ENCODE measurements at regions of chr5 and their contacts with region 1.

Region 1: DNA sequence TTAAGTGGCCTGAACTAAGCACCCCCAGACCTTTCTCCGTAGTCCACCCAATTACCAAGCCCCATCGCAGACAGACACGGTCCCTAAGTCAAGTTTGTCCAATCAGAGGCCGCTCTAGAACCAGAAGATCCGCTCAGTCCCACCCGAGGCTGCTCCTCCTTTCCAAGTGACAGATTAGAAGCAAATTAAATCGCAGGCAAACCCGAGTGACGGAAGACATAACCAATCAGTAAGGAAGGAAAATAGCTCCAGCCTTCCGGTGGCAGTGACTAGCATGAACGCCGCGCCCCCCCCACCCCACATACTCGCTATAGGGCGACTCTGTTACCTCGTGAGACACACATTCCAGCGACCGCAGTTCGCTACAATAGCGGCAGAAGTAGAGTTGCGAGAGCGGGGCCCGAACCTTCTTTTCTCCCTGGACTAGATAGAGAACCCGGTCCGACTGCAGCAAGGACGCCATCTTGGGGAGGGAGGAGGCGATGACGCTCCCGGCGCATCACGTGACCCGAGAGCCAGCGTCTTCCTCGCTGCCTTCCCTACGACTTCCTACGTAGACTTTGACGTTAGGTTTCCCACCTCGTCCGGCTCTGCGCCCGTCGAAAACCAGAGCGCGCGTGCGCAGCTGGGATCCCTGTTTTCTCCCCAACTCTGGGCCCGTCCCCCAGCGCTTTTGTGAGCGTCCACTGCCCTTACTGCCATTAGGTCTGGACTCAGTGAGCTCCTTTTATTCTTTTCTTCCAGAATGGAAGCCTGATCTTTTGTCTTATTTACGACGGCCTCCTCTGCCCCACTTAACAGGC is at the start of gene DCTN4:
- DNase-seq: peak; percentile 82 to 99 (median 90)
- ATAC-seq: peak; percentile 92
- H3K4me3 ChIP-seq: peak within 1 kb of the TSS; percentile 69
- H3K4me3 Mint-ChIP-seq: no peak within 1 kb of the TSS
- H3K27ac ChIP-seq: peak within 1 kb of the TSS; percentile 96
- H3K27ac Mint-ChIP-seq: no peak within 1 kb of the TSS
- H3K4me1 ChIP-seq: peaks cover 24% of the 10 kb centered on the region
- H3K4me1 Mint-ChIP-seq: peaks cover 33% of the 10 kb centered on the region
- H3K27me3 ChIP-seq: no peaks in the 10 kb centered on the region
- H3K27me3 Mint-ChIP-seq: no peaks in the 10 kb centered on the region
- CTCF ChIP-seq: no peak
- total RNA-seq, gene DCTN4: 81.2 to 84.4 TPM

Region 2: DNA sequence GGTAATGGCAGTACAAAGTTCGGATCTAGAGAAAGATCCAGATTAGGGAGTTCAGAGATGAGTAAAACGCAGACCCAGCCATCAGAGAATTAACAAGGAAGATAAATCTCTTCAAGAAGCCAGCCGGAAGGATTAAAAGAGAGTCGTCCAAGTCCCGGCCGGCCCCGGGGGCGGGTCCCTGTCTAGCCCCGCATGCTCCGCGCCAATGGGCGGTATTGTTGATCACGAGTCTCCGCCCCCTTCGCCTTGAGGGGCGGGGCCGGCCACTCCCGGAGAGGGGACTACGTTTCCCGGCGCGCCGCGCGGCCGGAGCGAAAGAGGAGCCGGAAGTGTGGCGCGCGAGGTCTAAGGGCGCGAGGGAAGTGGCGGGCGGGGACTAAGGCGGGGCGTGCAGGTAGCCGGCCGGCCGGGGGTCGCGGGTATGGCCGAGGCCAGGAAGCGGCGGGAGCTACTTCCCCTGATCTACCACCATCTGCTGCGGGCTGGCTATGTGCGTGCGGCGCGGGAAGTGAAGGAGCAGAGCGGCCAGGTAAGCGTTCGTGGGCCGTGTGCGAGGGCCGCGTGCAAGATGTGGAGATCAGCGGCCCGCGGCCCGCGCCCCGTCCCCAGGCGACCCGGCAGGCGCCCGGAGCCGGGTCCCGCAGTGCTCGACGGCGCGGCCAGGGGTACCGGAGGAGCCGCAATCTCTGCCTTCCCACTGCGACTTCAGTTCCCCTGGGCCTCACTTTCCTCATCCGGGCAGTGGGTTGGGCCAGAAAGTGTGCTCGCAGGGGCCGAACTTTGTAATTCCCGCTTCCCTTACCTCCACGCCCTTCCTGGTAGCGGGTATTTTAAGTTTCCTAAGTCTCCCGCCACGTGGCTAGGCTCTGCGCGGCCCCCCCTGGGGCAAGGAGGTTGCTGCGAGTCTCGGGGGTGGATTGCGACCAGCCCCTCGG is 401.1 kb before region 1 on chr5 and contains the start of gene TCOF1:
- CTCF ChIA-PET with region 1: no interaction called
- POLR2A ChIA-PET with region 1: no interaction called
- intact Hi-C with region 1: loop called in 1 of 2 experiments (anchors 5 kb)
- DNase-seq: peak; percentile 93 to 98 (median 97)
- ATAC-seq: peak; percentile 98
- H3K4me3 ChIP-seq: peak within 1 kb of the TSS; percentile 86
- H3K4me3 Mint-ChIP-seq: peak within 1 kb of the TSS; percentile 89
- H3K27ac ChIP-seq: peak within 1 kb of the TSS in 1 of 2 donors; percentile 46
- H3K27ac Mint-ChIP-seq: peak within 1 kb of the TSS; percentile 73
- H3K4me1 ChIP-seq: peaks cover 28% of the 10 kb centered on the region
- H3K4me1 Mint-ChIP-seq: peaks cover 47% of the 10 kb centered on the region
- H3K27me3 ChIP-seq: no peaks in the 10 kb centered on the region
- H3K27me3 Mint-ChIP-seq: no peaks in the 10 kb centered on the region
- CTCF ChIP-seq: no peak
- total RNA-seq, gene TCOF1: 40.4 to 43.2 TPM

Region 3: DNA sequence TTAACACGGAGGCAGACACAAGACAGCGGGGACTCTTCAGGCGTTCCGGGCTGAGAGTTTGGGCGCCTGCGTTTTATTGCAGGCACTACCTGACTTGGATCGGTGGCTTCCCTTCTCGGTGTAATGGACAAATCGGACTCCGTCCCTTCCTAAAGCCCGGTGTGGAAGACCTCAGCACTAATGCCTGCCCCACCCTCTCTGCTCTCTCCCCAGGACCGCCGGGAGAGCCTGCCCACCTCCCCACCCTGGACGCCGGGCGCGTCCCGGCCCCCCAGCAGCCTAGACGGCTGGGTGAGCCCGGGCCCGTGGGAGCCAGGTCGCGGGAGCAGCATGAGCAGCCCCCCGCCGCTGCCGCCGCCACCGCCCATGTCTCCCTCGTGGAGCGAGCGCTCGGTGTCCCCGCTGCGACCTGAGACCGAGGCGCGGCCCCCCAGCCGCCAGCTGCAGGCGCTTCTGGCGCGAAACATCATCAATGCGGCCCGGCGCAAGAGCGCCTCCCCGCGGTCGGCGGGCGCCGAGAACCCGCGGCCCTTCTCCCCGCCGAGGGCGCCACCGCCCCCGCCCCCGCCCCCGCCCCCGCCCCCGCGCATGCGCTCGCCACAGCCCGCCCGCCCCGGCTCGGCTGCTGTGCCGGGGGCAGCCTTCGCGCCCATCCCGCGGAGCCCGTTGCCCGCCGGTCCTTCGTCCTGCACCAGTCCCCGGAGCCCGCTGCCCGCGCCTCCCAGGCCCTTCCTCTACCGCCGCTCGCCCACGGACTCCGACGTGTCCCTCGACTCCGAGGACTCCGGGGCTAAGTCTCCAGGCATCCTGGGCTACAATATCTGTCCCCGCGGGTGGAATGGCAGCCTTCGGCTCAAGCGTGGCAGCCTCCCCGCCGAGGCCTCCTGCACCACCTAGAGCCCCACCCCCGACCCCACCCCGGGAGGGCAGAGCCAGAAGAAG is 102.3 kb before region 1 on chr5:
- CTCF ChIA-PET with region 1: no interaction called
- POLR2A ChIA-PET with region 1: no interaction called
- intact Hi-C with region 1: loop called in 1 of 2 experiments (anchors 5 kb)
- DNase-seq: peak; percentile 67 to 92 (median 80)
- ATAC-seq: peak; percentile 94
- H3K4me3 ChIP-seq: peak overlapping the region; percentile 68
- H3K4me3 Mint-ChIP-seq: peak overlapping the region; percentile 85
- H3K27ac ChIP-seq: no peak overlapping the region
- H3K27ac Mint-ChIP-seq: no peak overlapping the region
- H3K4me1 ChIP-seq: peaks cover 15% of the 10 kb centered on the region
- H3K4me1 Mint-ChIP-seq: peaks cover 10% of the 10 kb centered on the region
- H3K27me3 ChIP-seq: no peaks in the 10 kb centered on the region
- H3K27me3 Mint-ChIP-seq: no peaks in the 10 kb centered on the region
- CTCF ChIP-seq: peak; percentile 47

Region 4: GRCh38 chr5:150700594-150701293 is 58.0 kb before region 1 on chr5 and contains the start of gene RBM22:
- CTCF ChIA-PET with region 1: interaction called, 4 read pairs
- POLR2A ChIA-PET with region 1: interaction called, 52 read pairs
- intact Hi-C with region 1: loop called (anchors 2 kb)
- DNase-seq: peak; percentile 84 to 96 (median 90)
- ATAC-seq: peak; percentile 89
- H3K4me3 ChIP-seq: peak within 1 kb of the TSS; percentile 83
- H3K4me3 Mint-ChIP-seq: no peak within 1 kb of the TSS
- H3K27ac ChIP-seq: peak within 1 kb of the TSS; percentile 95 to 98
- H3K27ac Mint-ChIP-seq: no peak within 1 kb of the TSS
- H3K4me1 ChIP-seq: peaks cover 6% of the 10 kb centered on the region
- H3K4me1 Mint-ChIP-seq: no peaks in the 10 kb centered on the region
- H3K27me3 ChIP-seq: no peaks in the 10 kb centered on the region
- H3K27me3 Mint-ChIP-seq: no peaks in the 10 kb centered on the region
- CTCF ChIP-seq: peak; percentile 75
- total RNA-seq, gene RBM22: 98.2 to 101 TPM

Region 5: DNA sequence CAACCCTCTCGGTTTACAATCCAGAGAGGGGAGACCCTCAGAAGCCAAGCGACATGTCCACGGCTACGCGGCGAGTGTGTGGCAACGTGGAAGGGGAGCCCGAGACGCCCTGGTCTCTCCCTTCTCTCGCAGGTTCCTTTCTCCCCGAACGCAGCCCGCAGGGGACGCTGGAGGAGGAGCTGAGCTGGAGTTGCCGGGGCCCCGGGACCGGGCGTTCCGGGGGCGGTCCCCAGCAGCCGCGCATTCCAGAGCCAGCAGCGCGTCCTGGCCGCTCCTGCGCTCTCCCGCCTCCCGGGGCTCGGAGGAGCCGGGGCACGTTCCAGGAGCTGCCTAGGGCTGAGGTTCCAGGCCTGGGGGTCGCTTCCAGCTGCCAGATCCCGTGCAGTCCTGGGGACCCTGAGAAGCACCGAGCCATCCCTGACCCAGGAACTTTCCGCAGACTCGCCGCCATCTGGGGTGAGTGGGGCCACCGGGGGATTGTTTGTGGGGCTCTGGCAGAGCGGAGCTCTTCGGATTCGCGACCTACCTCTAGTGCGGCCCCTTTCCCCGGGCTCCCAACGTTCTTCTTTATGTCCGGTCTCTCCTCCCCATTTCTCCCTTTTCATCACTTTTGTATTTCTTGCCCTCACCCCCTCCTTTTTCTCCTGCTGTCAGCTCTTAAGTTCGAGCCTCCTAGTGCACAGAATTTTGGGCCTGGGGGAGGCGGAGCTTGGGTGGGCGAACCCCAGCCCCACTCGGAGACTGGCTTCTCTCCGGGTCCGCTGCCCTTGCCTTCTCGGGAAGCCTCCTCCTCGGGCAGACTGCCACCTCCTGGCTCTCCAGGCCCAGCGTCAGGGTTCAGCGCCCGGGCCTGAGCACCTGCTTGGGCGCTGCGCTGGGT is 20.0 kb after region 1 on chr5 and contains the start of gene SMIM3:
- CTCF ChIA-PET with region 1: interaction called, 5 read pairs
- POLR2A ChIA-PET with region 1: interaction called, 52 read pairs
- intact Hi-C with region 1: loop called in 1 of 2 experiments (anchors 2 kb)
- DNase-seq: peak; percentile 53 to 84 (median 68)
- ATAC-seq: peak; percentile 63
- H3K4me3 ChIP-seq: peak within 1 kb of the TSS; percentile 96
- H3K4me3 Mint-ChIP-seq: peak within 1 kb of the TSS; percentile 99
- H3K27ac ChIP-seq: peak within 1 kb of the TSS; percentile 62 to 70
- H3K27ac Mint-ChIP-seq: peak within 1 kb of the TSS; percentile 90
- H3K4me1 ChIP-seq: peaks cover 56% of the 10 kb centered on the region
- H3K4me1 Mint-ChIP-seq: peaks cover 58% of the 10 kb centered on the region
- H3K27me3 ChIP-seq: no peaks in the 10 kb centered on the region
- H3K27me3 Mint-ChIP-seq: no peaks in the 10 kb centered on the region
- CTCF ChIP-seq: peak; percentile 41
- total RNA-seq, gene SMIM3: 2.9 TPM

Region 6: GRCh38 chr5:150789943-150790611 is 31.3 kb after region 1 on chr5:
- CTCF ChIA-PET with region 1: no interaction called
- POLR2A ChIA-PET with region 1: interaction called, 9 read pairs
- intact Hi-C with region 1: loop called in 1 of 2 experiments (anchors 2 kb)
- DNase-seq: peak; percentile 23 to 83 (median 52)
- ATAC-seq: peak; percentile 96
- H3K4me3 ChIP-seq: no peak overlapping the region
- H3K4me3 Mint-ChIP-seq: peak overlapping the region; percentile 59
- H3K27ac ChIP-seq: no peak overlapping the region
- H3K27ac Mint-ChIP-seq: peak overlapping the region; percentile 64
- H3K4me1 ChIP-seq: peaks cover 20% of the 10 kb centered on the region
- H3K4me1 Mint-ChIP-seq: peaks cover 55% of the 10 kb centered on the region
- H3K27me3 ChIP-seq: no peaks in the 10 kb centered on the region
- H3K27me3 Mint-ChIP-seq: no peaks in the 10 kb centered on the region
- CTCF ChIP-seq: no peak